Activated T-helper 1 cell treated with anti-CD3 and anti-CD28 coated beads, Interleukin-12 subunit alpha, Interleukin-12 subunit beta, Interleukin-2, Interleukin-4 antibody, amounts not matched to agents 30 ng/mL and 10 ng/mL and 1 ng/mL, durations not matched to agents 14 hours and 24 hours and 36 hours (primary cell): ENCODE measurements at regions of chr2 and their contacts with region 1.

Region 1: GRCh38 chr2:63588385-63589147 is at the starts of genes MDH1 and WDPCP:
- DNase-seq: peak; percentile 90
- H3K4me3 Mint-ChIP-seq: peak within 1 kb of the TSS; percentile 97
- H3K27ac Mint-ChIP-seq: peak within 1 kb of the TSS; percentile 90
- H3K4me1 Mint-ChIP-seq: peaks cover 38% of the 10 kb centered on the region
- H3K27me3 Mint-ChIP-seq: no peaks in the 10 kb centered on the region
- total RNA-seq, gene MDH1: 186 and 197 TPM in 2 replicates
- total RNA-seq, gene WDPCP: 5.2 and 7.7 TPM in 2 replicates

Region 2: DNA sequence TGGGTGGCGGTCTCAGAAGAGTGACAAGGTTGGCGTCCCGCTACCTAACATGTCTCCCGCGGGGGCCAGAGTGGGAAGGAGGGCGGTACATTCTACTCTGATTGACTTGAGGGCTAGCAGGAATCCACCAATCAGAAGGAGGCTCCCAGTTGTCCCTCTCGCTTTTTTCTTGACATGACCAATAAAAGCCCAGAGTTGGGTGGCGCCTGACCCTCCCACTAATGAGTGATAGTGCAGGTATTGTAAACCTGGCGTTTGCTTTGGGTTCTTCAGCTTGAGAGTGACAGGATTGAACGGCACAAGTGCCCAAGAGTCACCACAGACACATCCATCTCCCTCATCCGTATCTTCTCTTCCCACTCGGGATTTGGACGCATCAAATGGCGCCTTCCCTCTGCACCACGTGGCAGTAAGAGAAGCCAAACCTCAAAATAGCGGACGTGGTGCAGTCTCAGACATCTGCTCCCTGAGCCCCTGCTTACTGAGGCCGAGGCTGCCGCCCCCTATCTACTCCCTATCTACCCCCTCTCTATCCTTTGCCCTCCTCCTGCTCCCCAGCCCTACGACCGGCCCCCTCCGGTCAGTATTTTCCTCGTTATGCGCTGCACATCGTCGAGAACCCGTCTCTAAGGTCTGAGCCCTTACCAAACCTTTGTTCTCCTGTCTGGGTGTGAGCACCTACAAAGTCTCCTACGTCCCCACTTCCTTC is 1733.9 kb before region 1 on chr2:
- intact Hi-C with region 1: loop called (anchors 1 kb)
- DNase-seq: peak; percentile 87
- H3K4me3 Mint-ChIP-seq: peak overlapping the region; percentile 98
- H3K27ac Mint-ChIP-seq: peak overlapping the region; percentile 88
- H3K4me1 Mint-ChIP-seq: peaks cover 23% of the 10 kb centered on the region
- H3K27me3 Mint-ChIP-seq: no peaks in the 10 kb centered on the region

Region 3: DNA sequence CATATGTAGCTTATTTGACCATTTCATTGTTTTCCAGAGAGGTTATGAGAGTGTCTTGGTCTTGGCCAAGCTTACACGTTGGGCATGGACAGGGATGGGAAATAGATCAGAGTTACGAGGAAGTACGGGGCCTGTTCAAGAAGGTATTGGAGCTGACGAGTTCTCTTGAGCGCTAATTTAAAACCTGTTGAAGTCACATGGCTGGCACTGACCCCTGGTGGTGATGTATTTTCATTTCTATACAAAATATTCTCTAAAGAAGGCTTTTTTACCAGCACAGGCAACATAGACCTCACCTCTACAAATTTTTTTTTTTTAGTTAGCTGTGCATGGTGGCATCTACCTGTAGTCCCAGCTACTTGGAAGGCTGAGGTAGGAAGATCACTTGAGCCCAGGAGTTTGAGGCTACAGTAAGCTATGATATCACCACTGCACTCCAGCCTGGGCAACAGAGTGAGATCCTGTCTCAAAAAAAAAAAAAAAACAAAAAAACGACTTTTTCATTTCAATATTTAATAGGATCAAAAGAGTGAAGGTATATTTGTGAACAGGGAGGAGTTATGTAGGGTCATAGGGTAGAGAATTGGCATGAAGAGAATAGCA is 272.8 kb after region 1 on chr2:
- intact Hi-C with region 1: loop called (anchors 1 kb)
- DNase-seq: peak; percentile 26
- H3K4me3 Mint-ChIP-seq: no peak overlapping the region
- H3K27ac Mint-ChIP-seq: no peak overlapping the region
- H3K4me1 Mint-ChIP-seq: peaks cover 42% of the 10 kb centered on the region
- H3K27me3 Mint-ChIP-seq: no peaks in the 10 kb centered on the region

Region 4: GRCh38 chr2:64453770-64454385 is 865.3 kb after region 1 on chr2 and contains the start of gene LGALSL:
- intact Hi-C with region 1: loop called (anchors 10 kb)
- DNase-seq: peak; percentile 17
- H3K4me3 Mint-ChIP-seq: peak within 1 kb of the TSS; percentile 83
- H3K27ac Mint-ChIP-seq: peak within 1 kb of the TSS; percentile 61
- H3K4me1 Mint-ChIP-seq: no peaks in the 10 kb centered on the region
- H3K27me3 Mint-ChIP-seq: peaks cover 47% of the 10 kb centered on the region
- total RNA-seq, gene LGALSL: 2.5 and 3.1 TPM in 2 replicates

Region 5: DNA sequence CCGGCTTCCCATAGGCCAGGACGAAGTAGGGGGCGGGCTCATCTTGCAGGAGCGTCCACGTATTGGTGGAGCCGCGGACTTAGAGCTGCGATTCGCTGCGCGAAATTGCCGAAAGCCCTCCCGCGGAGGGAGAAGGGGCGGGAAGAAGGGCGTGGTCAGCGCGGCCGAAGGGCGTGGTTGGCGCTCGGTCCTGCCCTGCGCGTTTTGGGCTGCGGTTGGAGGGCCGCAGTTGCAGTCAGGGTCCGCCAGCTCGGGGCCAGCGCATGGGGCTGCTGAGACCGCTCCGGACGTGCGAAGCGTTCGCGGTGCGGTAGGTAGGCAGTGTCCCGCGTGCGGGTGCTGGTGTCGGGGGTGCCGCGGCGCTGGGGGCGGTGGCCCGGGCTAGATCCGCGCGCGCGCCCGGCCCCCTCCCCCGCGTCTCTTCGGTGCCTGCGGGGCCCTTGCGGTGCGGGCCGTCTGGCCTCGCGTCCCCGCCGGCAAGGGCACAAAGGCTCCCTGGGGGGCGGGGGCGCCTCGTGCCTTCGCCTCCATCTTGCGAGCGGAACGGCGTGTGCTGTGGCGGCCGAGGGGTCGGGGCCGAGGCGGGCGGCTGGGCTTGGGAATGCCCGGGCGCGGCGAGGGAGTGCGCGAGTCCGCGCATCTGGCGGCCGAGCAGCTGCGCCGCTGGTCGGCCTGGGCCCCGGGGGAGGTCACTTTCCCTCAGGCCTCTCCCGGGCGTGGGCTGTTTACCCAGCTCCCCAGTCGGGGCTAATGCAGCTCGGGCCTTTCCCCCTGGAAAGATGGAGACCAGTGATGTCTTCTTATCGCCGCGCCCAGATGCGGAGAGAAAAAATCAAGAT is 1467.9 kb after region 1 on chr2 and contains the start of gene CEP68:
- intact Hi-C with region 1: loop called (anchors 2 kb)
- DNase-seq: peak; percentile 96
- H3K4me3 Mint-ChIP-seq: peak within 1 kb of the TSS; percentile 94
- H3K27ac Mint-ChIP-seq: peak within 1 kb of the TSS; percentile 84
- H3K4me1 Mint-ChIP-seq: peaks cover 48% of the 10 kb centered on the region
- H3K27me3 Mint-ChIP-seq: peaks cover 6% of the 10 kb centered on the region
- total RNA-seq, gene CEP68: 4.0 and 5.5 TPM in 2 replicates

Region 6: DNA sequence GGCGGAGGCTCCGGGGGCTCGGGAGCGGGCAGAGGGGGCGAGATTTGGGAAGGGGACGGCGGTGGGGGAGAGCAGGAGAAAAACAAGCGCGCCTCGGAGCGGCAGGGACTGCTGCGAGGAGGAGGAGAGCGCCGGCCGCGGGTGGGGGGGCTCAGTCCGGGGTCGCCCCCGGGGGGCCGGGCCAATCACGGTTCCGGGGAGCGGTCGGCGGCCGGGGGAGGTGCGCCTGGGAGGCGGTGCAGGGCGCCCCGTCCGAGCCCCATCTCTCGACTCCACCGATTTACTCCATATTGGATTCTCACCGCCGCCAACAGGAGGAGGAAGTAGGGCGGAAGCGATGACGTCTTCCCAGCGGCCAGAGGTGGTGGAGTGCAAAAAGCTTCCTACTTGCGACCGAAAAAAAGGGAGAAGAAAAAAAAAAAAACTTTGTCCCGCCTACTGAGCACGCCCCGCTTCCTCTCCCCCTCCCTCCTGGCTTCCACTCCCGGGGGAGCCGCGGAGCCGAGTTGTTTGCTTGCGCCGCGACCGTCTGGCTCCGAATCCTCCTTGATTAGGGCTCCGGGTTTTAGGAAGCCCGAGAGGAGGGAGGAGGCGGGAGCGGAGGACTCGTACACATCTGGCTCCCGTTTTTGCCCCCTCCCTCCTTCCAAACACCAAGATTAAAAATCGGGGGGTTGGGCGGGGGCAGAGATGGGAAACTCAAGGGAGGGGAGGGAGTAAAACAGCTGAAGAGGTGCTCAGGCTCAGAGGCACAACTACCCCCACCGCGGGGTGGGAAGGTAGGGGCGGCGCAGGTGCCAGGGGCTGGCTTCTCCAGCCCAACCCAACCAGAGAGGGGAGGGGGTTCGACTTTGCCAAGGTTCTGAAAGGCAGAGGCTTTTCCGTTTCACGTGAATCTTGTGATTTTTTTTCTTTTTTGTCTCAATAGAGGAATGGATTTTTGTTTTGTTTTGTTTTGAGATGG is 1843.9 kb after region 1 on chr2 and contains the start of gene SPRED2:
- intact Hi-C with region 1: loop called (anchors 2 kb)
- DNase-seq: peak; percentile 71
- H3K4me3 Mint-ChIP-seq: peak within 1 kb of the TSS; percentile 95
- H3K27ac Mint-ChIP-seq: peak within 1 kb of the TSS; percentile 92
- H3K4me1 Mint-ChIP-seq: peaks cover 24% of the 10 kb centered on the region
- H3K27me3 Mint-ChIP-seq: peaks cover 37% of the 10 kb centered on the region
- total RNA-seq, gene SPRED2: 8.5 and 9.4 TPM in 2 replicates